Heart left ventricle (tissue), 16 donors: ENCODE measurements at regions of chr3 and their contacts with region 1.

Region 1: GRCh38 chr3:177050501-177051237 is 146.6 kb downstream of the TBL1XR1 start:
- DNase-seq: no peak
- ATAC-seq: peak; percentile 53 to 74 (median 60)
- H3K4me3 ChIP-seq: no peak overlapping the region
- H3K27ac ChIP-seq: no peak overlapping the region
- H3K4me1 ChIP-seq: peaks cover 0 to 22% (median 14%) of the 10 kb centered on the region in 12 donors
- H3K27me3 ChIP-seq: no peaks in the 10 kb centered on the region
- CTCF ChIP-seq: peak; percentile 35 to 73 (median 63)
- POLR2A ChIP-seq: no peak

Region 2: GRCh38 chr3:176824811-176825210 is 225.9 kb before region 1 on chr3:
- intact Hi-C with region 1: no loop called
- DNase-seq: no peak
- ATAC-seq: no peak
- H3K4me3 ChIP-seq: no peak overlapping the region
- H3K27ac ChIP-seq: no peak overlapping the region
- H3K4me1 ChIP-seq: no peaks in the 10 kb centered on the region
- H3K27me3 ChIP-seq: no peaks in the 10 kb centered on the region
- CTCF ChIP-seq: no peak
- POLR2A ChIP-seq: no peak

Region 3: DNA sequence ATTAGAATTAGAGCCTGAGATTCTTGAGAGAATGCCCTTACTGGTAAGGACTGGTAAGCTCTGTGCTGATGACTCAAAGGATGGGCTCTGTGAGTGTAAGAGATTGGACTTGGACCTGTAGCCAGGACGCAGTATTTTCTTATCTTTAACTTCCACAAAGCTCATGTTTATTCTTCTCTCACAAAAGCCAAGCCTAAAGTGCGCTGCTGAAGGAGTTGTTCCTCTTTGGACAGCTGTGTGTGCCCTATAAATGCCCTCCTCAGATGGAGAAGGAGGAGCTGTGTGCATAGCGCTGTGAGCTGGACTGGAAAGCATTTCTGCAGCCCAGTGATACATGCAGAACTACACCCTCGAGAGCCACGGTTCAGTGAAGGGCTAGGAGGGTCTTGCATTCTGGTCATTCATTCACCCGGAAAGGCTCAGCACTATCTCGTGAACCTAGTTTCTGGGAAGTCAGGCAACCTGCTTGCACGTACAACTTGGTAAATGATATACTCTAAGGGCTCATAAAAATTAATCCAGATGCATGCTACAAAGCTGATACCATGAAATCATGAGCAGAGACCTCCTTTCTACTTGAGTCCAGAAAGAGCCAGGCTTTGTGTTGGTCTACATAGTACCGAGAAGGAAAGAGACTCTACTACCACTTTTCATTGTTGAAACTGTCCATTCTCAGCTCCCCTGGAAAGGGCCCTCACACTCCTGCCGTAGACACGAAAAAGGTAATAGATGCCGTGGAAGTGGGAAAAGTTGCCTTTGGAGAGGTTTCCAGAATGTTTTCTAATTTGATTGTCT is 249.6 kb after region 1 on chr3:
- intact Hi-C with region 1: no loop called
- DNase-seq: peak in 4 of 5 donors; percentile 20 to 52 (median 36)
- ATAC-seq: peak in 3 of 4 donors; percentile 89 to 96 (median 91)
- H3K4me3 ChIP-seq: peak overlapping the region in 1 of 12 donors; percentile 14
- H3K27ac ChIP-seq: peak overlapping the region in 11 of 12 donors; percentile 2 to 80 (median 49)
- H3K4me1 ChIP-seq: peaks cover 0 to 15% (median 7%) of the 10 kb centered on the region in 12 donors
- H3K27me3 ChIP-seq: no peaks in the 10 kb centered on the region
- CTCF ChIP-seq: no peak
- POLR2A ChIP-seq: no peak

Region 4: GRCh38 chr3:178155521-178155920 is 1104.9 kb after region 1 on chr3:
- intact Hi-C with region 1: loop called in 1 of 10 experiments (anchors 10 kb)
- DNase-seq: no peak
- ATAC-seq: no peak
- H3K4me3 ChIP-seq: no peak overlapping the region
- H3K27ac ChIP-seq: no peak overlapping the region
- H3K4me1 ChIP-seq: peaks cover 0 to 9% (median 0%) of the 10 kb centered on the region in 12 donors
- H3K27me3 ChIP-seq: no peaks in the 10 kb centered on the region
- CTCF ChIP-seq: peak in 4 of 12 donors; percentile 6 to 14 (median 12)
- POLR2A ChIP-seq: no peak